Testis (tissue), 5 donors: ENCODE measurements at regions of chr17 and their contacts with region 1.

Region 1: DNA sequence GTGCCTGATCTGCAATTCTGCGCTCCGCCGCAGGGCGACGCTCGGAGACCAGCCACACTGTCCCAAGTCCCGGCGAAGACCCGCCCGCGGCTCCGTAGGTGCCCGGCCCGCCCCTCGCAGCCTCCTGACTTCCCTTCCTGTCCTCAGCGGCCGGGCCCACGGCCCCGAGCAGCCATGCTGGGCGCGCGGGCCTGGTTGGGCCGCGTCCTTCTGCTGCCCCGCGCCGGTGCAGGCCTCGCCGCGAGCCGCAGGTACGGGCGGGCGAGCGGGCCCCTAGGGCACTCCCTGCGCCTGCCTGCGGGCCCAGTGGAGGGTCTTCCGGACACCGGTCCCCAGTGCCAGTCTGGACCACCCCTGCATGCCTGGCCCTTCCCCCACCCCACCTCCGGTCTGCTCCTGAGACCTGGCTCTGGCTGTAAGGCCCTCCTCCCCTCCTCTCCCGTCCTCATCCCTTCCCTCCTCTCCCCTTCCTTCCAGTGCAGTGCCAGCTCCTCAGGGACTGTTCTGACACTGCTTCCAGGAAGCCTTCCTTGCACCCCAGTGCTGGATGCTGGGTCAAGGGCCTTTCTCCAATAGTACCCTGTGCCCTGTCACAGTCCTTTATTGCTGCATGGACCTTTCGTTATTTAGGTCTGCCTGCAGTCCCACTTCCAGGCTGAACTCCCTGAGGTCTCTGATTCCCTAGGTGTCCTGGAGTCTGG is at the start of gene SPATA20:
- DNase-seq: peak; percentile 96
- H3K4me3 ChIP-seq: peak within 1 kb of the TSS; percentile 61 to 79
- H3K27ac ChIP-seq: peak within 1 kb of the TSS; percentile 74 to 81
- H3K4me1 ChIP-seq: peaks cover 19% of the 10 kb centered on the region
- H3K27me3 ChIP-seq: no peaks in the 10 kb centered on the region
- CTCF ChIP-seq: peak; percentile 96 to 99 (median 98)
- POLR2A ChIP-seq: peak; percentile 71
- total RNA-seq, gene SPATA20: 207 to 338 TPM

Region 2: DNA sequence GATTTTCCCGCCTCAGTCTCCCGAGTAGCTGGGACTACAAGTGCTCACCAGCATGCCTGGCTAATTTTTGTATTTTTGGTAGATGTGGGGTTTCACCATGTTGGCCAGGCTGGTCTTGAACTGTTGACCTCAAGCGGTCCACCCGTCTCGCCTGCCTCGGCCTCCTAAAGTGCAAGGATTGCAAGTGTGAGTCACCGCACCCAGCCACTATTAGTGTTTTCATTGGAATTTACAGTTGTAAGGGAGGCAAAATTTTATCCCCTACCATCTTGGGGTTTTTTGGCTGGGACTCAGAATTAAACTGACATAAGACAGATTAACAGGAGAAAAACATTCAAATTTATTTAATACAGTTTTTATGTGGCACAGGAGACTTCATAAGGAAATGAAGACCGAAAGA is 51.3 kb before region 1 on chr17:
- intact Hi-C with region 1: no loop called
- DNase-seq: no peak
- H3K4me3 ChIP-seq: no peak overlapping the region
- H3K27ac ChIP-seq: no peak overlapping the region
- H3K4me1 ChIP-seq: no peaks in the 10 kb centered on the region
- H3K27me3 ChIP-seq: no peaks in the 10 kb centered on the region
- CTCF ChIP-seq: no peak
- POLR2A ChIP-seq: no peak

Region 3: DNA sequence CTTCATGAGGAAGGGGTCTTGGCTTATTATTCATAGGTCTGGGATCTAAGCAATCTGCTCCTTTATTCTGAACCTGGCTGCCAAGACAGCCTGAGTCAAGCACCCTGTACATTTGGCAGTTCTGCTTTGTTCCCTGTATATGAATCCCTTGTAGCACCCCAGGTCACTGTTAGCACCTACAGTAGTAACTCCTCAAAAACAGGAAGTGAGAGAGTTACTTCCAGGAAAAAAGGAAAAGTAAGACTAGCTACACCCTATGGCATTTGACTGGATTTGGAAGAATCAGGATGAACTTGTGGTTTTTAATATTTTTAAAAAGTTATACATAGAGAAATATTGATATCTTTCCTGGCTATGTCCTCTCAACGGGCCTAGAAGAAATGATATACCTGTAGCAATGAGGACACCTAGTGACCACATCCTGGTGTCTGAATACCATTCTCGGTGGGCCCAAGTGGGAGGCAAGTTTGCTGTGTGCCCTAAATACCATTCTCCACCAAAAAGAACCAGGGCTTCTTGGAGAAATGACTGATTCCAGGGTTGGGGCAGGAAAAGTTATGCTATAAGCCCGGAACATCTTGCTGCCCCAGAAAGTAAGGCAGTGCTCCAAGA is 150.6 kb after region 1 on chr17:
- intact Hi-C with region 1: loop called (anchors 5 kb)
- DNase-seq: no peak
- H3K4me3 ChIP-seq: no peak overlapping the region
- H3K27ac ChIP-seq: no peak overlapping the region
- H3K4me1 ChIP-seq: no peaks in the 10 kb centered on the region
- H3K27me3 ChIP-seq: no peaks in the 10 kb centered on the region
- CTCF ChIP-seq: no peak
- POLR2A ChIP-seq: no peak

Region 4: DNA sequence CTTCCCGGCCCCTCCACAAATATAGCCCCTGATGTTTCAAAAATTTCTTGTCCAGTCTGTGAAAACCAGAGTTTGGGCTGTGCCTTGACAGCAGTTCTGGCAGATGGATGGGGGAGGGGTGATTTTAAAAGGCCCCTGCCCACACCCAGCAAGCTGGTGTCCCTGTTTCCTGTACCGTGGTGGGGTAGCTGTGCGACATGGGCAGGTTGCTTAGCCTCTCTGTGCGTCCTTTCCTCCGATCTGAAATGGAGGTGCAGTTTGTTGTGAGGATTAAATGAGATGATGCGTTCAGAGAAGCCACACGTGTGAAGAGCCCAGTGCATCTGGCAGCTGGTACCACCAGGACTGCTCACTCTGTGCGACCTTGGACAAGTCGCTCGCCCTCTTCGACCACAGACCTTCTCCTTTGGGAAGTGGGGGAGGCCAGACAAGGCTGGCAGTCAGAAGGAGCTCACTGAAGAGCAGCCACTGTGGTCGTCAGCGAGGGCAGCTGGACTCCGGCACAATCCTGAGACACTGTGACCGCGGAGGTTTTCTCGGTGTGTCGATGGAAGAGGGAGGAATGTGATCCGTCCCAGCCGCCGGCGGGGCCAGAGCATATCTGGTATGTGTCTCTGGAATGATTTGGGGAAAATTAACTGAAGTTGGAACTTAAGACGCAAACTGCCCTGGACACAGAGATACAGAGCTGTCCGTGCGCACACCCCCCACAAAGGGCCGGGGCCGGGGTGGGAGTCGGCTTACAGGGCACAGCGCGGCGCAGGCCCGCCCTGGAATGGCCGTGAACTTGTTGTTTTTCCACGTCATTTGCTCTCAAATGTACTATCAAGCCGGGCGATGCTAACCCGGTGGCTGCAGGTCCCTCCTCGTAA is 287.5 kb after region 1 on chr17:
- intact Hi-C with region 1: loop called (anchors 10 kb)
- DNase-seq: peak; percentile 80
- H3K4me3 ChIP-seq: peak overlapping the region in 1 of 2 donors; percentile 2
- H3K27ac ChIP-seq: peak overlapping the region; percentile 59 to 87
- H3K4me1 ChIP-seq: peaks cover 59% of the 10 kb centered on the region
- H3K27me3 ChIP-seq: no peaks in the 10 kb centered on the region
- CTCF ChIP-seq: no peak
- POLR2A ChIP-seq: no peak